ENCODE measurements at regions of chr6 and their contacts with region 1.

Region 1: DNA sequence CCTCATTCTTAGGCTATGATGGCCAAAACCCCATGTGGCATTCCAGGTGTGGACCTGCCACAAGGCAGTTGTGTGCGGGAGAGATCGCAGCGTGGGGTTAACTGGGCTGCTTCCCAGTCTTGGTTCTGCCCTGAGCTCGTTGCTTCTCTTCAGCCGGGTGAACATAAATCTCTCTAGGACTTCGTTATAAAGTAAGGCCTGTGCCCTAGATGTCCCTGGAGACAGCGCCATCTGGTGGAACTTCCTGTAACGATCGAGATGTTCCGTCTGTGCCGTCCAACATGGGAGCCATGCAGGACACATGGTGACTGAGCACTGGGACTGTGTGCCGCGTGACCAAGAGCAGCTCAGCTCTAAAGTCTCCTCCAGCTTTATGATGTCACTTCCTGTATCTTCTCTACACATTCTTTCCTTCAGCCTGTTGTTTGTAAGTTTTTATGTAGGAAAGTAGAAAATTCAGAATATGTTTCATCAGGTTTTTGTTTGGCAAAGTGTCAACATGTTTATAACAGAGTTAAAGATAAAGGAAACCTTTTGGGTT is 26.8 kb upstream of the RPP40 start:
- DNase-seq: peak; percentile 92
- ATAC-seq: peak; percentile 99
- H3K4me3 Mint-ChIP-seq: no peak overlapping the region
- H3K27ac Mint-ChIP-seq: peak overlapping the region; percentile 78
- H3K4me1 Mint-ChIP-seq: peaks cover 12% of the 10 kb centered on the region
- H3K27me3 Mint-ChIP-seq: no peaks in the 10 kb centered on the region
- CTCF ChIP-seq: peak; percentile 58

Region 2: GRCh38 chr6:5006222-5006621 is 24.4 kb before region 1 on chr6:
- CTCF ChIA-PET with region 1: interaction called, 13 read pairs
- POLR2A ChIA-PET with region 1: interaction called, 3 read pairs
- intact Hi-C with region 1: no loop called
- DNase-seq: no peak
- ATAC-seq: no peak
- H3K4me3 Mint-ChIP-seq: no peak overlapping the region
- H3K27ac Mint-ChIP-seq: no peak overlapping the region
- H3K4me1 Mint-ChIP-seq: peaks cover 15% of the 10 kb centered on the region
- H3K27me3 Mint-ChIP-seq: peaks cover 2% of the 10 kb centered on the region
- CTCF ChIP-seq: no peak

Region 3: GRCh38 chr6:5020142-5020541 is 10.5 kb before region 1 on chr6:
- CTCF ChIA-PET with region 1: interaction called, 12 read pairs
- POLR2A ChIA-PET with region 1: no interaction called
- intact Hi-C with region 1: no loop called
- DNase-seq: no peak
- ATAC-seq: no peak
- H3K4me3 Mint-ChIP-seq: no peak overlapping the region
- H3K27ac Mint-ChIP-seq: no peak overlapping the region
- H3K4me1 Mint-ChIP-seq: no peaks in the 10 kb centered on the region
- H3K27me3 Mint-ChIP-seq: no peaks in the 10 kb centered on the region
- CTCF ChIP-seq: no peak

Measured in activated CD8-positive, alpha-beta T cell treated with anti-CD3 and anti-CD28 coated beads for 36 hours (primary cell).